ENCODE measurements at regions of chr19 and their contacts with region 1.

Region 1: GRCh38 chr19:4638828-4639530 is at the start of gene TNFAIP8L1:
- ATAC-seq: peak; percentile 76 to 92 (median 87)
- H3K4me3 ChIP-seq: peak within 1 kb of the TSS; percentile 40 to 65 (median 48)
- H3K27ac ChIP-seq: peak within 1 kb of the TSS in 1 of 2 donors; percentile 4
- H3K4me1 ChIP-seq: peaks cover 0 to 13% of the 10 kb centered on the region in 2 donors
- total RNA-seq, gene TNFAIP8L1: 0.61 to 5.7 (median 2.6) TPM

Region 2: GRCh38 chr19:4267101-4267900 is 371.7 kb before region 1 on chr19:
- in situ Hi-C with region 1: loop called in 1 of 9 experiments (anchors 25 kb)
- ATAC-seq: peak; percentile 60 to 87 (median 70)
- H3K4me3 ChIP-seq: no peak overlapping the region
- H3K27ac ChIP-seq: no peak overlapping the region
- H3K4me1 ChIP-seq: no peaks in the 10 kb centered on the region

Region 3: DNA sequence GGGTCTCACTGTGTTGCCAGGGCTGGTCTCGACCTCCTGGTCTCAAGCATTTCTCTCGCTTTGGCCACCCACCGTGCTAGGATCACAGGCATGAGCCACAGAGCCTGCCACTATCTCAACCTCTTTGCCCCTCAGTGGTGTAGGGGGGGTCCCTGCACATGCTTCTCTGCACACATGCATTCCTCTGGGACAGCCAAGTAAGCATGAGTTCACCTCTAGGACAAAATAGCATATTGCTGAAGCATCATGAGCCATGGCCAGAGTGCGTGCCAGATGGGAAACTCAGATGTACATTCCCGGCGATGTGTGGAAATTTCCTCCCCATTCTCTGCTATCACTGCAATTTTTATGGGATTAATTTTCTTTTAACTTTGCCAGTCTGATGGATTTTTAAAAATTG is 213.4 kb before region 1 on chr19:
- in situ Hi-C with region 1: no loop called
- ATAC-seq: peak in 2 of 8 experiments; percentile 18 to 63
- H3K4me3 ChIP-seq: no peak overlapping the region
- H3K27ac ChIP-seq: no peak overlapping the region
- H3K4me1 ChIP-seq: no peaks in the 10 kb centered on the region

Region 4: GRCh38 chr19:4576016-4576933 is 62.7 kb before region 1 on chr19:
- in situ Hi-C with region 1: loop called in 3 of 9 experiments (anchors 10 kb)
- ATAC-seq: peak; percentile 10 to 70 (median 16)
- H3K4me3 ChIP-seq: no peak overlapping the region
- H3K27ac ChIP-seq: peak overlapping the region; percentile 68 to 75
- H3K4me1 ChIP-seq: peaks cover 22 to 27% of the 10 kb centered on the region in 2 donors

Region 5: DNA sequence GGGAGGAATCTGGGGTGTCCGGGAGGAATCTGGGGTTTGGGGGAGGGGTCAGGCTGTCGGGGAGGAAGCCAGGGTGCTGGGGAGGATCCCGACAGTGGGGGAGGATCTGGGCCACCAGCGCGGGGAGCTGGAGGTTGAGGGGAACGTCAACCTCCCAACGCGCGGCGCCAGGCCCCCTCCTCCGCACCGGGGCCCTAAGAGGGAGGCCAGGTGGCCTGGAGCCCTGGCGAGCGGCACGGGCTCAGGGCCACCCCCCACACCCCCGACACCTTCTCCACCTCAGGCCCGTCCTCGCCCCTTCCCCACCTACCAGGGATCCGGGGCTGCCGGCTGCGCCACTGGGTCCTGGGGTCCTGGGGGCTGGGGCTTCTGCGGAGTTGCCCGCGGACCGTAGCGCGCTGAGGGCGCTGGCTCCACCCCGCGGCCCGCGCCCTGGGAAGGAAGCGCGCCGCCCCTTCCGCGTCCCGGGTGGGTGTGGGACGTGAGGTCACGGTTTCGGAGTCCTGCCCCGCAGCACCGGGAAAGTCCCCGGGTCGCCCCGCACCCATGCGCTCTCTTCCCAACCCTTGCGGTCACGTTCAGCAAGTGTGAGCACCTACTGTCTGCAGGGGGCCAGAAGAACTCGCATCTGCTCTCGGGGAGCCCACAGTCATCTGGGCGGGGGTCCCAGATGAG is 192.5 kb after region 1 on chr19 and contains the start of gene TICAM1:
- in situ Hi-C with region 1: no loop called
- ATAC-seq: peak; percentile 53 to 95 (median 83)
- H3K4me3 ChIP-seq: peak within 1 kb of the TSS; percentile 11 to 41 (median 30)
- H3K27ac ChIP-seq: no peak within 1 kb of the TSS
- H3K4me1 ChIP-seq: no peaks in the 10 kb centered on the region
- total RNA-seq, gene TICAM1: 0.11 to 7.0 (median 0.72) TPM

Measured in motor neuron (in vitro differentiated cells).